ENCODE measurements at regions of chr12 and their contacts with region 1.

Region 1: GRCh38 chr12:94133964-94134795 is 14.2 kb upstream of the PLXNC1 start:
- DNase-seq: peak; percentile 49
- H3K4me3 Mint-ChIP-seq: no peak overlapping the region
- H3K27ac Mint-ChIP-seq: no peak overlapping the region
- H3K4me1 Mint-ChIP-seq: peaks cover 18% of the 10 kb centered on the region
- H3K27me3 Mint-ChIP-seq: peaks cover 8% of the 10 kb centered on the region

Region 2: DNA sequence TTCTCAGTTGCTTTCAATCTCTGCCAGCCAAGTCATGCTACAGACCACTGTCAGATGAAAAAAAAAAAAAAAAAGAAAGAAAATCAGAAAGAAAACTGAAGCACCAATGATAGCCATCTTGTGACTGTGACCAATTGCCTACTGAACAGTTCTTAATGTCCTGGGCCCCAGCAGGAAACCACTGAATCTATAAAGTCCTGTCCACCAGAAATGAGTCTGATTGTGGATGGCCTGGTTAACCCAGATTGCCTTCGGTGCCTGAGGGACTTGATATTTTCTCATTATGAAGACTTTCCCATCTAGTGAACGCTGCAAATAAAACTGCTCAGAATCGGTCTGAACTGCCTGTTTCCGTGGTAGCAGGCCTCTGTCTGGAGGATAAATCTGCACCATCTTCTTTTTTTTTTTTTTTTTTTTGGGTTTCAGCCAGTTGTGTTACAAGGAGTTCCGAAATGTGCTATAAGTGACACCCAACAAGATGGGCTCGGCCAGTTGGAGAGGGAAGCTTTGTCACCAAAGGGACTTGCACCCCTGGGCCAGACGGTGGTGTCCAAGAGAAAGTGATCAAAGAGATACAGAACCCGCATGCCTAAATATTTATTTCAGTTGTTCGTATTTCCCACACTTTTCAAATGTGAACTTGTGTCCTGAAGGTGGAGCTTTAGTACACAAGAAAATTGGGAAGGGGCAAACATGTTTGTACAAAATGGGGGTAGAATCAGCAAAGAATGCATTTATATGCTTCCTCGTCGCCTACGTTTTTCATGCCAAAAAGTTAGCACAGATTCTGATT is 11.2 kb after region 1 on chr12:
- CTCF ChIA-PET with region 1: interaction called, 37 read pairs
- DNase-seq: no peak
- H3K4me3 Mint-ChIP-seq: no peak overlapping the region
- H3K27ac Mint-ChIP-seq: no peak overlapping the region
- H3K4me1 Mint-ChIP-seq: peaks cover 8% of the 10 kb centered on the region
- H3K27me3 Mint-ChIP-seq: peaks cover 52% of the 10 kb centered on the region

Region 3: DNA sequence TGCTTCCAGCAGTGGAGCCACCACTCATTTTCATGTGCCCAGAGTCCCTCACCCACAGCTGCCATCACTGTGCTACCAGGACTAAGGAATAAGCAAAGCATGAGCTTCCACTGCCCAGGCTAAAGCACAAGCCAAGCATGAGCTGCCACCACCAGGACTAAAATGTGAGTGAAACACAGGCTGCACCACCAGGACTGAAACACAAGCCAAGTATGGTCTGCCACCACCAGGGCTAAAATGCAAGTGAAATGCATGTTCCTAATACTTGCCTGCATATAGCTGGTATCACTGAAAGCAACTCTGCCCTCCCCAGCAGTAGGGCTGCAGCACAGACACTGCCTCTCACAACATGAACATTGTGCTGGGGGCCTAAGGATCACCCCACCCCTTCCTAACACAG is 295.5 kb after region 1 on chr12:
- CTCF ChIA-PET with region 1: interaction called, 10 read pairs
- DNase-seq: no peak
- H3K4me3 Mint-ChIP-seq: no peak overlapping the region
- H3K27ac Mint-ChIP-seq: no peak overlapping the region
- H3K4me1 Mint-ChIP-seq: peaks cover 3% of the 10 kb centered on the region
- H3K27me3 Mint-ChIP-seq: no peaks in the 10 kb centered on the region

Region 4: GRCh38 chr12:94532490-94533422 is 398.6 kb after region 1 on chr12:
- CTCF ChIA-PET with region 1: interaction called, 17 read pairs
- DNase-seq: peak; percentile 82
- H3K4me3 Mint-ChIP-seq: no peak overlapping the region
- H3K27ac Mint-ChIP-seq: no peak overlapping the region
- H3K4me1 Mint-ChIP-seq: peaks cover 36% of the 10 kb centered on the region
- H3K27me3 Mint-ChIP-seq: peaks cover 17% of the 10 kb centered on the region

Measured in activated naive CD4-positive, alpha-beta T cell treated with anti-CD3 and anti-CD28 coated beads, Interleukin-2, amount 10 ng/mL, durations not matched to agents 7 days and 5 days (primary cell).